ENCODE measurements at regions of chr4 and their contacts with region 1.

Region 1: DNA sequence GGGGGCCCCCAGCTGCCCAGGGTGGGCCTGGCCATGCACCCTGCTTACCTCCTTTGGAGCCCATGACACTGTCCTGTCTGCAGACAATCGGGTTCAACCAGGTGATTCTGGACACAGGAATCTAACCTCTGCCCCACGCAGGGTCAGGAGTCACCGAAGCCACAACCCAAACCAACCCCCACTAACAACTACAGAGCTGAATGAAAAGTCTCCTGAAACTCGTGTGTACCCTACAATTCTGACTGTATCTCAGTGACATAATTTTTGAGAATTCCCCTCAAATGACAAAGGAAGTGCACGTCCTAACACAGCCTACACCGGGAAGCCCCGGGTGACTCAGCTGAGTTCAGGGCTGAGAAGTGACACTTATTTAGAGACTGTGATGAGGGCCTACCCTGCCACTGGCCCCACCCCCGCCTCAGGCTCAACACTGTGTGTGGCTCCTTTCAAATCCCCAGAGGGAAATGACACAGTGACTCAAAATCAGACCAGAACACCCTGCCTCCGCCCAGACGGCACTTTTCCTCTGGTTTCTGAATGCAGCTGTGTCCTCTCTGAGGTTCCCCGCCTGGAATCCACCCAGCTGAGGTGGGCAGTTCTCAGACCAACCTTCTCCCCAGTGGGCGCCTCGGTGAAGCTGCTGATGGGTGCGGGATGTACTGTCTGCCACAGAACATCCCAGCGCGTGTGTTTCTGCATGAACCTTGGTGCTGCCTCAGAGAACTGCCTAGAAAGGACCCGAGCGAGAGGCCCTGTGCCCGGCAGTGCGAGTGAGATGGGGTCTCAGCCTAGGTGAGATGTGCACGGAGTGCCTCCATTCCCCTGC is 9.9 kb downstream of the TNIP2 start:
- DNase-seq: peak; percentile 81
- ATAC-seq: peak; percentile 95
- H3K4me3 Mint-ChIP-seq: peak overlapping the region; percentile 68
- H3K27ac Mint-ChIP-seq: peak overlapping the region; percentile 94
- H3K4me1 Mint-ChIP-seq: peaks cover 55% of the 10 kb centered on the region
- H3K27me3 Mint-ChIP-seq: no peaks in the 10 kb centered on the region
- CTCF ChIP-seq: no peak

Region 2: GRCh38 chr4:2241410-2242353 is 504.5 kb before region 1 on chr4 and contains the starts of genes HAUS3 and POLN:
- CTCF ChIA-PET with region 1: no interaction called
- POLR2A ChIA-PET with region 1: no interaction called
- intact Hi-C with region 1: loop called (anchors 5 kb)
- DNase-seq: peak; percentile 99
- ATAC-seq: peak; percentile 96
- H3K4me3 Mint-ChIP-seq: peak within 1 kb of the TSS; percentile 91
- H3K27ac Mint-ChIP-seq: peak within 1 kb of the TSS; percentile 86
- H3K4me1 Mint-ChIP-seq: peaks cover 54% of the 10 kb centered on the region
- H3K27me3 Mint-ChIP-seq: no peaks in the 10 kb centered on the region
- CTCF ChIP-seq: no peak
- total RNA-seq, gene HAUS3: 17.9 and 19.0 TPM in 2 replicates
- total RNA-seq, gene POLN: 1.4 and 1.7 TPM in 2 replicates

Region 3: GRCh38 chr4:2424581-2424980 is 321.6 kb before region 1 on chr4:
- CTCF ChIA-PET with region 1: no interaction called
- POLR2A ChIA-PET with region 1: no interaction called
- intact Hi-C with region 1: no loop called
- DNase-seq: no peak
- ATAC-seq: no peak
- H3K4me3 Mint-ChIP-seq: no peak overlapping the region
- H3K27ac Mint-ChIP-seq: no peak overlapping the region
- H3K4me1 Mint-ChIP-seq: peaks cover 17% of the 10 kb centered on the region
- H3K27me3 Mint-ChIP-seq: peaks cover 23% of the 10 kb centered on the region
- CTCF ChIP-seq: no peak

Region 4: DNA sequence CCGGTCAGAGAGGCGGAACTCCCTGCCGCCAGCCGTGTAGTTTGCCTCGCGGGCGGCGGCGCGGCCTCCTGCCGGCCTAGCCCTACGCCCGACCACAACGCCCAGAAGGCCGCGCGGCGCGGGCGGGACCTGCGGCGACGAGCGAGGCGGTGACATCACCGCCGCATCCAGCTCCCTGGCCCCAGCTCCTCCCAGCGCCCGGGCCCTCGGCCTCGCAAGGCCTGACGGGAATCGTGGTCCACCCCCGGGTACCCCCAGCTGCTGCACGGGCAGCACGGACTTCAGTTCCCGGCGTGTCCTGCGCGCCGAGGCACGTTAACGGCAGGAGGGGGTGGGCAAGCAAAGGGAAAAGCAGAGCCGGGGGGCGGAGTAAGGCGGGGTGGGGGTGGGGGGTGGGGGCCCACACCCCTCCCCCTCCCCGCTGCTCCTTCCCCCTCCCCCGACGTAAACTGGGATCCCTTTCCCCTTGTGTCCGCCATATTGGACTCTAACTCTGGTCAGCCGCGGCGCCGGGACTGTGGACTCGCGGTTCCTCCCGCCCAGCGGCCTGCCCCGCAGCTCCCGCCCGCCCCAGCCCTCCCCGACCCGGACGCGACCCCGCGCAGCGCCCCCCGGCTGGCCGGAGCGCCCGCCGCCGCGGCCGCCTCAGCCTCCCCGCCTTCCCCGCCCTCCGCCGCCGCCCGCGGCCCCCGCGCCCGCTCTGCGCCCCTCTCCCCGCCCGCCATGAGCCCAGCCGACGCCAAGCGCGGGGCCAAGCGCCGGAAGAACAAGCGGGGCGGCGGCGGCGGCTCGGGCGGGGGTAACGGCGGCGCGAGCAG is 209.8 kb before region 1 on chr4 and contains the start of gene FAM193A:
- CTCF ChIA-PET with region 1: no interaction called
- POLR2A ChIA-PET with region 1: interaction called, 5 read pairs
- intact Hi-C with region 1: loop called (anchors 1 kb)
- DNase-seq: peak; percentile 94
- ATAC-seq: peak; percentile 92
- H3K4me3 Mint-ChIP-seq: peak within 1 kb of the TSS; percentile 92
- H3K27ac Mint-ChIP-seq: peak within 1 kb of the TSS; percentile 90
- H3K4me1 Mint-ChIP-seq: peaks cover 23% of the 10 kb centered on the region
- H3K27me3 Mint-ChIP-seq: no peaks in the 10 kb centered on the region
- CTCF ChIP-seq: no peak
- total RNA-seq, gene FAM193A: 40.0 and 42.8 TPM in 2 replicates

Region 5: DNA sequence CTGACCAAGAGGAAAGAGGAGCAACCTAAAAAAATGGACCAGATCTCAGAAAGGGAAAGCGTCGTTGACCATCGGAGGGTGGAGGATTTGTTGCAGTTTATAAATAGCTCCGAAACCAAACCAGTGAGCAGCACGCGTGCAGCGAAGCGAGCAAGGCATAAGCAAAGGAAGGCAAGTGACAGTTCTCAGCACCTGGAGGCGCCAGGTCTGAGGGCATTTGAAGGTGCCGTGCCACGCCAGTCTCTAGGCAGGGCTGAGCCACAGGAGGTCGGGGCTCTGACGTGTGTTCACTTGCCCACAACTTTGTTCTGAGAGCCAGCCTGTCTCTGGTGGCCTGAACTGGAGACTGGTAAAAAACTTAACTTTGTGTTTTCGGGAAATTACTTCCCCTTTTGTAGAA is 49.8 kb before region 1 on chr4:
- CTCF ChIA-PET with region 1: interaction called, 8 read pairs
- POLR2A ChIA-PET with region 1: interaction called, 65 read pairs
- intact Hi-C with region 1: loop called (anchors 1 kb)
- DNase-seq: peak; percentile 72
- ATAC-seq: peak; percentile 90
- H3K4me3 Mint-ChIP-seq: peak overlapping the region; percentile 74
- H3K27ac Mint-ChIP-seq: peak overlapping the region; percentile 96
- H3K4me1 Mint-ChIP-seq: peaks cover 72% of the 10 kb centered on the region
- H3K27me3 Mint-ChIP-seq: no peaks in the 10 kb centered on the region
- CTCF ChIP-seq: no peak

Region 6: GRCh38 chr4:2761035-2761923 is 15.1 kb after region 1 on chr4:
- CTCF ChIA-PET with region 1: interaction called, 3 read pairs
- POLR2A ChIA-PET with region 1: interaction called, 40 read pairs
- intact Hi-C with region 1: loop called (anchors 1 kb)
- DNase-seq: no peak
- ATAC-seq: no peak
- H3K4me3 Mint-ChIP-seq: no peak overlapping the region
- H3K27ac Mint-ChIP-seq: no peak overlapping the region
- H3K4me1 Mint-ChIP-seq: peaks cover 23% of the 10 kb centered on the region
- H3K27me3 Mint-ChIP-seq: no peaks in the 10 kb centered on the region
- CTCF ChIP-seq: no peak

Region 7: GRCh38 chr4:2852481-2852921 is 106.3 kb after region 1 on chr4:
- CTCF ChIA-PET with region 1: no interaction called
- POLR2A ChIA-PET with region 1: interaction called, 10 read pairs
- intact Hi-C with region 1: no loop called
- DNase-seq: no peak
- ATAC-seq: peak; percentile 77
- H3K4me3 Mint-ChIP-seq: peak overlapping the region; percentile 73
- H3K27ac Mint-ChIP-seq: peak overlapping the region; percentile 82
- H3K4me1 Mint-ChIP-seq: peaks cover 91% of the 10 kb centered on the region
- H3K27me3 Mint-ChIP-seq: no peaks in the 10 kb centered on the region
- CTCF ChIP-seq: no peak

Region 8: GRCh38 chr4:3074078-3074795 is 328.0 kb after region 1 on chr4 and contains the starts of genes HTT and HTT-AS:
- CTCF ChIA-PET with region 1: no interaction called
- POLR2A ChIA-PET with region 1: no interaction called
- intact Hi-C with region 1: loop called (anchors 1 kb)
- DNase-seq: peak; percentile 93
- ATAC-seq: peak; percentile 77
- H3K4me3 Mint-ChIP-seq: peak within 1 kb of the TSS; percentile 92
- H3K27ac Mint-ChIP-seq: peak within 1 kb of the TSS; percentile 95
- H3K4me1 Mint-ChIP-seq: peaks cover 39% of the 10 kb centered on the region
- H3K27me3 Mint-ChIP-seq: no peaks in the 10 kb centered on the region
- CTCF ChIP-seq: no peak
- total RNA-seq, gene HTT: 239 and 242 TPM in 2 replicates
- total RNA-seq, gene HTT-AS: not detected in 2 replicates

Region 9: GRCh38 chr4:3736806-3737205 is 990.6 kb after region 1 on chr4:
- CTCF ChIA-PET with region 1: no interaction called
- POLR2A ChIA-PET with region 1: no interaction called
- intact Hi-C with region 1: no loop called
- DNase-seq: no peak
- ATAC-seq: no peak
- H3K4me3 Mint-ChIP-seq: no peak overlapping the region
- H3K27ac Mint-ChIP-seq: no peak overlapping the region
- H3K4me1 Mint-ChIP-seq: no peaks in the 10 kb centered on the region
- H3K27me3 Mint-ChIP-seq: peaks cover 10% of the 10 kb centered on the region
- CTCF ChIP-seq: no peak